ENCODE measurements at regions of chr3 and their contacts with region 1.

Region 1: GRCh38 chr3:137013955-137014688 is 56.3 kb downstream of the IL20RB start:
- DNase-seq: peak; percentile 75
- H3K4me3 ChIP-seq: peak overlapping the region; percentile 26 to 54 (median 31)
- H3K27ac ChIP-seq: peak overlapping the region; percentile 74
- H3K4me1 ChIP-seq: peaks cover 17% of the 10 kb centered on the region
- H3K27me3 ChIP-seq: no peaks in the 10 kb centered on the region
- CTCF ChIP-seq: peak; percentile 69 to 82

Region 2: DNA sequence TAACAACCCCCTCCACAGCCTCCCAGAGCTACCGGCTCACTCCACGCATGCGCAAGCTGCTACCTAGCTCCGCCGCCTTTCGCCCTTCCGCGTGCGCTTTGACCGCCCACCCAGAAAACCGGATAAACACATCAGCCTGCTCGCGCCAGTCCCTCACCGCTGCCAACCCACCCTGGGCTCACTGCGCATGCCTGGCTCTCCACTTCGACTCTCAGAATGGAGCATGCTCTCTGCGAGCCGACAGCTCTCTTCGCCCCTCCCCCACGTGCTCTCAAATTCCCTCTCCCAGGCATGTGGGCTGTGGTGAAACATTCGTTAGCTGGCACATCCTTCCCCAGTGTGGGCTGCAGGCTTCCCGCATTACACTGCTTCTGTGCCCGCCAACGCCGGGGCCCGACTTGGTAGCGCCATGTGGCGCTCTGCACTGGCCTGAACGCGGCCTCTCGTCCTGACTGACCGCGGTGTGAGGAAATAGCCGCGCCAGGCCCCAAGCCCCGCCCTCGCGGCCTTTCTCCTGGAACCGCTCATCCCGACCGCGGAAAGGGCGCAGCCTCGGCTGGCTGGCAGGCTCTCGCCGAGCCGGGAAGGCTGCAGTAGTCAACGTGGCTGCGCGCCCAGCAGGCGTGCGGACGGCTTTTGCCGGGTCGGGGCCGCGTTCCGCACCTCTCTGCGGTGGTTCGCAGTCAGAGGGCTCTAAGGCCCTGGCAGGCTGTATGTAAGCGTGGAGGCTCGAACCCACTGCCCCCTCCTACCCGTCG is 817.5 kb before region 1 on chr3:
- CTCF ChIA-PET with region 1: no interaction called
- dilution Hi-C with region 1: no loop called
- in situ Hi-C with region 1: no loop called
- intact Hi-C with region 1: loop called (anchors 10 kb)
- DNase-seq: peak; percentile 100
- H3K4me3 ChIP-seq: peak overlapping the region; percentile 39 to 93 (median 92)
- H3K27ac ChIP-seq: peak overlapping the region; percentile 76
- H3K4me1 ChIP-seq: peaks cover 13% of the 10 kb centered on the region
- H3K27me3 ChIP-seq: no peaks in the 10 kb centered on the region
- CTCF ChIP-seq: no peak

Region 3: GRCh38 chr3:136390574-136390973 is 623.5 kb before region 1 on chr3:
- CTCF ChIA-PET with region 1: no interaction called
- dilution Hi-C with region 1: no loop called
- in situ Hi-C with region 1: loop called (anchors 25 kb)
- intact Hi-C with region 1: loop called (anchors 1 kb)
- DNase-seq: no peak
- H3K4me3 ChIP-seq: no peak overlapping the region
- H3K27ac ChIP-seq: no peak overlapping the region
- H3K4me1 ChIP-seq: no peaks in the 10 kb centered on the region
- H3K27me3 ChIP-seq: no peaks in the 10 kb centered on the region
- CTCF ChIP-seq: no peak

Region 4: DNA sequence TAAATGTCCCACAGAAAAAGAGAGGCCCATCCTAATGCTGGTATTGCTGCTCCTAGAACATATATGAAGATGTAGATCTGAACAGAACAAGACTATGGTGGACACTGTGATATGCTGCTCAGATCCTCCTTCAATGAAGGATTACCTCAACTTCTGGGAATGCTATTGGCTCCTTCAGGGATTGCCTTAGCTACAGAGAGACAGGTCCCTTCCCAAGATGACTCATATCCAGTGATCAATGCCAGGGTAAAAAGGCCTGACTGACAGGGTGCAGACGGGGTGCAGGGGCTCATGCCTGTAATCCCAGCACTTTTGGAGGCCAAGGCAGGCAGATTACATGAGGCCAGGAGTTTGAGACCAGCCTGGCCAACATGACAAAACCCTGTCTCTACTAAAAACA is 241.4 kb before region 1 on chr3:
- CTCF ChIA-PET with region 1: no interaction called
- dilution Hi-C with region 1: no loop called
- in situ Hi-C with region 1: loop called in 1 of 2 experiments (anchors 10 kb)
- intact Hi-C with region 1: no loop called
- DNase-seq: peak; percentile 29
- H3K4me3 ChIP-seq: no peak overlapping the region
- H3K27ac ChIP-seq: no peak overlapping the region
- H3K4me1 ChIP-seq: no peaks in the 10 kb centered on the region
- H3K27me3 ChIP-seq: no peaks in the 10 kb centered on the region
- CTCF ChIP-seq: no peak

Region 5: GRCh38 chr3:136861890-136862616 is 152.1 kb before region 1 on chr3 and contains the start of gene NCK1:
- CTCF ChIA-PET with region 1: no interaction called
- dilution Hi-C with region 1: no loop called
- in situ Hi-C with region 1: no loop called
- intact Hi-C with region 1: loop called (anchors 2 kb)
- DNase-seq: peak; percentile 99
- H3K4me3 ChIP-seq: peak within 1 kb of the TSS; percentile 63 to 88 (median 72)
- H3K27ac ChIP-seq: peak within 1 kb of the TSS; percentile 77
- H3K4me1 ChIP-seq: peaks cover 11% of the 10 kb centered on the region
- H3K27me3 ChIP-seq: no peaks in the 10 kb centered on the region
- CTCF ChIP-seq: peak in 1 of 2 donors; percentile 6
- total RNA-seq, gene NCK1: 46.2 to 47.0 TPM

Region 6: DNA sequence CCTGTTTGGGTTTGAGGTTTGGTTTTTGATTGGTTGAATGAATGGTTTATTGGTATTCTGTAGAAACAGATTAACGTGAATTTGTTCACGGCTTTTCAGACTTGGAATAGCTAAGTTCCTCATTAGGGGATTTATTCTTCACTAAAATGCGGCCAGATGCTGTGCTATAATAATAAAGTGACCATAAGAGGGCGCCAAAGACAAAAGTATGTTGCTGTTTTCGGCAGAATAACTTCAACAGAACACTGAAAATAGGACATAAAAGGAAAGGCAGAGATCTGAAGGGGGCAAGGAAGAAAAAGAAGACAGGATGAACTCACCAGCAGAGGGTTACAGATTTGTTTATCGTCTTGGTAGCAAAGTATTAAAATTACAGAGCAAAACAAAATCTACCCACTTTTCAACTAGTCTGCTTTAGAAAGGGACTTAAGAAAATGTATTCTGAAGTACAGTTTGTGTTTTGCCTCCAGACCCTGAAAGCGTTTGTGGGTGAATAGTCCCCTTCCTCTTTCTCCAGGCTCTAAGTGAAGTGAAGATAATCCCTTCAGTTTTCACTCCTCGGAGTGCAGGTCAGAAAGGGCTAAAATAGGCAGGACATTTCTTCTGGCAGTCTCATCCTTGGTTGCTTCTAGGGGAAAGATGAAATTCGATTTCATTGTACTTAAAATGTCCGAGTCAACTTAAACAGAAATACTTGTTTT is 91.3 kb after region 1 on chr3:
- CTCF ChIA-PET with region 1: no interaction called
- dilution Hi-C with region 1: no loop called
- in situ Hi-C with region 1: no loop called
- intact Hi-C with region 1: no loop called
- DNase-seq: peak; percentile 35
- H3K4me3 ChIP-seq: no peak overlapping the region
- H3K27ac ChIP-seq: no peak overlapping the region
- H3K4me1 ChIP-seq: no peaks in the 10 kb centered on the region
- H3K27me3 ChIP-seq: no peaks in the 10 kb centered on the region
- CTCF ChIP-seq: peak; percentile 54 to 59

Region 7: DNA sequence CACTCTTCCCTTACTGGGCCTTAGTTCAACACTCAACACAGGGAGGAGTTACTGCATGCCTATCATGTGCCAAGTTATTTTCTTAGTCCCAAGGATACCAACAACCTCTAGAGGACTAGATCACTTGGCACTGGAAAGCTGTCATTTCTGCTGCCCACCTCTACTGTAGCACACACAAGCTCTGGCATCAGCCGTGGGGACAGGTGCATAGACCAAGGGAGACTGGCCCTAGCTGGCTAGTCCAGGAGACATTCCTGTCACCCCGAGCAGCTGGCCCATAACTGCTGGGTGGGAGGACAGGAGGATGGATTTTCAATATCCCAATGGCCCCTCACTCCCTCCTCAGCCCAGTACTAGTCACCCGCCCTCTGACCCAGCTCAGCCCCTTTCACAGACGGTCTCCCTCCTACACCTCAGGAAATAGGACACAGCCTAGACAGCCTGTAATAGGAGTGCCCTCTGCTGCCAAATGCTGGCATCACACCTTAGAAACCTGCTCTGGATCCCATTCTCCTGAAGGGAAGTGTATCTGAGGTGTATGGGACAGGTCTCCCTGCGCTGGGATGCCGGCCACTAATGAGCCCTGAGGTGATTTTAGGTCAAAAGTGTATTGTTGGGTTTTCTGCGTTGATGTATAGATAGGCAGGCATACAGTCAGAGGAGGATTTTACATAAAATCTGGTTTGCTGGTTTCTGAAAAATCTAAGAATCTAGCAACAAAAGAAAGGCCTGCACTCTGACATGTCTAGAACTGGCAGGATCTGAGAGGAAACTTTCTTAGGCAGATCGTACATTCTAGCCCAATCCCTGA is 1104.7 kb after region 1 on chr3:
- CTCF ChIA-PET with region 1: no interaction called
- dilution Hi-C with region 1: no loop called
- in situ Hi-C with region 1: no loop called
- intact Hi-C with region 1: no loop called
- DNase-seq: peak; percentile 67
- H3K4me3 ChIP-seq: no peak overlapping the region
- H3K27ac ChIP-seq: no peak overlapping the region
- H3K4me1 ChIP-seq: peaks cover 8% of the 10 kb centered on the region
- H3K27me3 ChIP-seq: no peaks in the 10 kb centered on the region
- CTCF ChIP-seq: peak; percentile 89 to 95